ENCODE measurements at regions of chr5 and their contacts with region 1.

Region 1: DNA sequence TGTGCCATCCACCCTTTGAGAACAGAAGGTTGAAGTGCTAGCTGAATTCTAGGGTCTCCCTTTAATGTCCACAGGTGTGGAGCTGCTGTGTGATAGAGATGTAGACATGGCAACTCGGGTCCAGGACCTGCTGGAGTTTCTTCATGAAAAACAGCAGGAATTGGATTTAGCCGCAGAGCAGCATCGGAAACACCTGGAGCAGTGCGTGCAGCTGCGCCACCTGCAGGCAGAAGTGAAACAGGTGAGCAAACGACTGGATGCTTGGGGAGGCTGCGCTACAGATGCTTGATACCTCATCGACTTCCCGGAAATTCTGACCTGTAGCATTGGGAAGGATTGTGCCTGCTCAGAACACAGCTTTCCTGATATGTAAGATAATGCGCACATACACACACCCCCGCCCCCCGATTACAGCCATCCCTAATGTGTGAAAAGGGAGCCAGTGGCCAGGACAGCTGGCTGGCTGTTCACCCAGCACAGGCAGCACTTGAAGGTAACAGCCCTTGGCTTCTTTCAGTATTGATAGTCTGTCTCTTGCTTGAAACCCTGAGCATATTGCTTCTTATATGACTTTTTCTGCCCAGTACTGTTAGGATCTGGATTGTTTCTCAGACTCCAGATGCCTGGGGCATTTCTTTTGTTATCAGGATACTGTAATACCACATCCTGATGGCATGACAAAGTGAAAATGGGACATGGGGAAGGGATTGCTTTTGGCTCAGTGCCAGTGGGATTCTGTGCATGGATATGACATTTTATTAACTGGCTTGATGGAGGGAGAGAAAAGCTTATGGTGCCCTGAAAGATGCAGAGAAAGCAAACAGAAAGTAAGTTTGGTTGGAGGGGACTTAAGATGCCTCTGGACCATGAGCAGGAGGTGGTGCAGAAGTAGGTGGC is 216.8 kb upstream of the OTULINL start:
- DNase-seq: peak; percentile 13
- ATAC-seq: peak; percentile 95
- H3K4me3 ChIP-seq: no peak overlapping the region
- H3K27ac ChIP-seq: no peak overlapping the region
- H3K4me1 ChIP-seq: no peaks in the 10 kb centered on the region
- H3K27me3 ChIP-seq: no peaks in the 10 kb centered on the region
- CTCF ChIP-seq: peak; percentile 54 to 90 (median 87); a peak in 5 of 6 replicates
- POLR2A ChIP-seq: no peak
- RAD21 ChIP-seq: peak; percentile 60

Region 2: DNA sequence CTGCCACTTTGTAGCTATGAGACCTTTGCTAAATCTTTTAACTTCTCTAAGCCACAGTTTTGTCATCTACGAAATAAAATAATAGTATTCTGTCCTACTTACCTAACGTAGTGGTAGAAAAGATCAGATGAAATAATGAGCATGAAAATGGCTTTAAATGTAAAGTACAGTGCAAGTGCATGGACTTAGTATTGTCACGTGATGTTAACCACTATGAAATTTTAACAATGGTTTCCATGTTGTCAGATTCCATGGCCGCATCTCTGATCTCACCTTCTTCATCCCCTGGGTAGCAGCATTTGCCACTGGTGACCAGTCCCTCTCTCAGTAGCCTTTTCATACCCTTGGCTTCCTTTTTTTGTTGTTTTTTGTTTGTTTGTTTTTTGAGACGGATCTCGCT is 466.3 kb before region 1 on chr5:
- CTCF ChIA-PET with region 1: no interaction called
- POLR2A ChIA-PET with region 1: no interaction called
- RAD21 ChIA-PET with region 1: no interaction called
- intact Hi-C with region 1: no loop called
- DNase-seq: no peak
- ATAC-seq: no peak
- H3K4me3 ChIP-seq: no peak overlapping the region
- H3K27ac ChIP-seq: no peak overlapping the region
- H3K4me1 ChIP-seq: no peaks in the 10 kb centered on the region
- H3K27me3 ChIP-seq: peaks cover 9% of the 10 kb centered on the region; the same call in 1 of the 2 replicates
- CTCF ChIP-seq: no peak
- POLR2A ChIP-seq: no peak
- RAD21 ChIP-seq: no peak

Region 3: GRCh38 chr5:13987843-13988464 is 376.9 kb before region 1 on chr5:
- CTCF ChIA-PET with region 1: interaction called, 4 read pairs
- POLR2A ChIA-PET with region 1: no interaction called
- RAD21 ChIA-PET with region 1: no interaction called
- intact Hi-C with region 1: loop called (anchors 1 kb)
- DNase-seq: peak; percentile 42
- ATAC-seq: peak; percentile 64
- H3K4me3 ChIP-seq: no peak overlapping the region
- H3K27ac ChIP-seq: no peak overlapping the region
- H3K4me1 ChIP-seq: peaks cover 7 to 14% of the 10 kb centered on the region in 2 experiments
- H3K27me3 ChIP-seq: no peaks in the 10 kb centered on the region
- CTCF ChIP-seq: peak; percentile 72 to 92 (median 75)
- POLR2A ChIP-seq: no peak
- RAD21 ChIP-seq: peak; percentile 92

Region 4: DNA sequence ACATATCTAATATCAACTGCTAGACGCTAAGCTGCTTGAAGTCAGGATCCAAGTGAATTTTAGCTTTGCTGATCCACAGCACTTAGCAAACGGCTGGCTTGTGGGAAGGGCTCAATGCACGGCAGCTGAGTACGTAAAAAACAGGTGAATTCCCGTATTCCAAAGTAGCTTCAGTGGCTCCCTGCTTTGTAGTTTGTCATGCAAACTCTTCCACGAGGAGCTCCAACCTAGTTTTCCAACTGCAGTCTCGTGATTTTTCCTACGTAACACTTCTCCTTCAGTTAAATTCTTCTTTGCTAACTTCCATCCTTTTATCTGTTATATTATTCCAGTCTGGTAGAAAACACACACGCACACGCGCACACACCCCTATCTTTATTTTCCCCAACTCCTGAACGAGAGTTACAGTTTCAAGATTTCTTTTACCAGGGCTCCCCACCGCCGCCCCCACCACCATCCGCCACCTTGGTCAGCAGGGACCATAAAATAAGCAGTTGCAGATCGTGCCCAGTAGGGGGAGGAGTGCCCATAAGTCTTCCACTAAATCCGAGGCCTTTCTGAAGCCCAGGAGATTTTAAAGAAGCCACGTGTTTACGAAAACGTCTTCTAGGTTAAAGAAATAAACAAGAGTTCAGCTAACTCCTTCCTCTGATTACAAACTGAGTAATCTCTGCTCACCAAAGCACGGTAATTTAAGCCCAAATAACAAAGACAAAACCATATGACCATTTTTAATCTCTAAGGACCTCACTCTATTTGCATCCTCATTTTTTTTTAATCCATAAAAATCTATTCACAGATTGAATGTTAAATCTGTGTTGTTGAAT is 256.4 kb before region 1 on chr5:
- CTCF ChIA-PET with region 1: interaction called, 3 read pairs
- POLR2A ChIA-PET with region 1: no interaction called
- RAD21 ChIA-PET with region 1: no interaction called
- intact Hi-C with region 1: loop called (anchors 5 kb)
- DNase-seq: peak; percentile 71
- ATAC-seq: peak; percentile 85
- H3K4me3 ChIP-seq: peak overlapping the region in 1 of 2 experiments; percentile 27; a peak in 2 of 4 replicates
- H3K27ac ChIP-seq: no peak overlapping the region
- H3K4me1 ChIP-seq: peaks cover 18 to 40% of the 10 kb centered on the region in 2 experiments
- H3K27me3 ChIP-seq: no peaks in the 10 kb centered on the region
- CTCF ChIP-seq: peak; percentile 57 to 80 (median 73); a peak in 5 of 6 replicates
- POLR2A ChIP-seq: no peak
- RAD21 ChIP-seq: peak; percentile 82

Region 5: DNA sequence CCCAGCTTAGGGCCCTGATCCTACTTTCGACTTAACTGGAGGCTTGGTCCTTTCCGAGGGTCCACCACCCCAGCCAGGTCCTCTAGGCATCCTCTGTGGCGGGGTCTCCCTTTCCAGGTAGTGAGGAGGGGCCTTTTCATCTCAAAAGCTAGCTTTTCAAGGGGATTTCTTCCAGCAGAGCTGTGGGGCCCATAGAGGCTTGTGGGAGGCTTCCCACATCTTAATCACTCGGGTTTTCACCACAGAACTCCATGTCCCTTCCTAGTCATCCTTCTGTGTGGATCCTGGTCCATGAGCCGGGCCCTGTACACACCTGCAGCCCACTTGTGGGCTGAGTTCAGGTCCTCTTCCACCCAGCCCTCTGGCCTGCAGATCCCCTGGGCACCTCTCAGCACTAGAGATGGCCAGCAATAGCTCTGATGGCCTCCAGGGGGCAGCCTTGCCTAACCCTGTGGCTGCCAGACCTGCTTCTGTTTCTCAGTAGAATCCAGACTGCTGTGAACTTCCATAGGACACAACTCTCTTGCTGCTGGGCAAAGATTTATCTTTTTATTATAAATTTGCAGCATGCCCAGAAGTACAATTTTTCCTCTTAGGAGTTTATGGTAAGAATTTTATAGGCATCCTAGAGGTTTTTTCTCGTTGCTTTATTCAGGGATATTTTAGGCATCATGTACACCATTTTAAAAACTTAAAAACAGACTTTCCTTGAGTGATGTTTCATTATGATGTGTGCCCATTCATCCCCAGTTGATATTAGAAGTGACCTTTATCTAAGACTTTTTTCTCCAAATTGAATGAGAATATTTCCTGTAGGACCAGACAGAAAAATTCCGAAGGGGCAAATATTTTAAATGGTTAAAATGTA is 12.7 kb before region 1 on chr5:
- CTCF ChIA-PET with region 1: interaction called, 17 read pairs
- POLR2A ChIA-PET with region 1: interaction called, 3 read pairs
- RAD21 ChIA-PET with region 1: no interaction called
- intact Hi-C with region 1: no loop called
- DNase-seq: peak; percentile 27
- ATAC-seq: peak; percentile 99
- H3K4me3 ChIP-seq: no peak overlapping the region
- H3K27ac ChIP-seq: no peak overlapping the region
- H3K4me1 ChIP-seq: no peaks in the 10 kb centered on the region
- H3K27me3 ChIP-seq: no peaks in the 10 kb centered on the region
- CTCF ChIP-seq: peak; percentile 38 to 98 (median 94); a peak in 5 of 6 replicates
- POLR2A ChIP-seq: no peak
- RAD21 ChIP-seq: peak; percentile 54

Region 6: DNA sequence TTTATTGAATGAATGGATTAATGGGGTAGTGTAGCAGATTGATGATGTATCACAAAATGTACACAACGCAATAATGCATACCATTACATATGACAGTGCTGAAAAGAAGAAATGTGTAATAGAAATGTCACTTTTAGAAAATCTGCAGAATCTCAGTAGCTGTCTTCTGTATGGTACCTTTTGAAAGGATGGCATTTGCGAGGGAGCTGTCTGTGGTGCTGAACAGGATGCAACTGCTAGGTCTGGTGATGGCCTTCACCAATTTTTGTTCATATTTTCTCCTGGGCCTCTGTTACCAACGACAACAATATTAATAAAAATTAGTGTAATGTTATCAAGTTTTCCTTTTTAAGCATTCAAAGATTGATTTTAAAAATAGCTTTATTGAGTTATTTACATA is 263.5 kb after region 1 on chr5:
- CTCF ChIA-PET with region 1: no interaction called
- POLR2A ChIA-PET with region 1: no interaction called
- RAD21 ChIA-PET with region 1: no interaction called
- intact Hi-C with region 1: no loop called
- DNase-seq: no peak
- ATAC-seq: no peak
- H3K4me3 ChIP-seq: no peak overlapping the region
- H3K27ac ChIP-seq: no peak overlapping the region
- H3K4me1 ChIP-seq: no peaks in the 10 kb centered on the region
- H3K27me3 ChIP-seq: no peaks in the 10 kb centered on the region; the same call in 1 of the 2 replicates
- CTCF ChIP-seq: no peak
- POLR2A ChIP-seq: no peak
- RAD21 ChIP-seq: no peak

Region 7: GRCh38 chr5:14650052-14650451 is 285.2 kb after region 1 on chr5:
- CTCF ChIA-PET with region 1: interaction called, 20 read pairs
- POLR2A ChIA-PET with region 1: no interaction called
- RAD21 ChIA-PET with region 1: no interaction called
- intact Hi-C with region 1: no loop called
- DNase-seq: no peak
- ATAC-seq: no peak
- H3K4me3 ChIP-seq: no peak overlapping the region
- H3K27ac ChIP-seq: no peak overlapping the region
- H3K4me1 ChIP-seq: no peaks in the 10 kb centered on the region
- H3K27me3 ChIP-seq: peaks cover 7% of the 10 kb centered on the region; the same call in 1 of the 2 replicates
- CTCF ChIP-seq: no peak
- POLR2A ChIP-seq: no peak
- RAD21 ChIP-seq: no peak

Region 8: DNA sequence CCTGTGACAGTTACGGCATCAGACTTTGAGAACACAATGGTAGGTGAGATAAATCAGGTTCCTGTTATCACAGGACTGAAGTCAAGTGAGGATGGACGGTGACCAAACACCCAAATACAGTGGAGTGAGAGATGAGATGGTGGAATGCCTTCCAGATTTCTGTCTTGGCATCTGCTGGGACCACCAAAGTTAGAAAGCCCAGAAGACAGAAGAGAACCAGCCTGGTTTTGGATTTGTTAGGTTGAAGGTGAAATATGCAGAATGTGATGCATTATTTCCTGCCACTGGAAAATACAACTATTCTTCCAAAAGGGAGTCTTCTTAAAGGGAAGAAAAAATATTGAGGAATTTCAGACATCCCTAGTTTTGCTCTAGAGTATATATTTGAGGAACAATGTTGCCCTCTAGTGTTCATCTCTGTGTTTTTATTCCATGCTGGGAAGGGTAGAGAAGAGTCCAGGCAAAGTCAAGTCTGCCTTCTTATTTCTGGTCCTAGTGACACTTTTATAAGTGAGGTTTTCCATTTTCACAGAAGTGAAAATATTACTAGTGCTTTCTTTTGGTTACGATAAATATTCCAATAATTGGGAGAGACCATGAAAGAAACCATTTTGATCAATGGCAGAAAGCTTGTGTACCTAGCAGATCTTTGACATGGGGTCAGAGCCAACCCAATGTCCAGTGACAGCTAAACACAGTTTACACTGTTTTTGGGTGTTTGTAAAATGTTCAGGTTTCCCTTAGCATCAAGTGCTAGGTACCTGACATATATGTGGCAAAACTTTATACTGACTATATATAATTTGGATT is 649.0 kb after region 1 on chr5:
- CTCF ChIA-PET with region 1: interaction called, 3 read pairs
- POLR2A ChIA-PET with region 1: no interaction called
- RAD21 ChIA-PET with region 1: no interaction called
- intact Hi-C with region 1: loop called (anchors 10 kb)
- DNase-seq: peak; percentile 58
- ATAC-seq: peak; percentile 89
- H3K4me3 ChIP-seq: no peak overlapping the region
- H3K27ac ChIP-seq: no peak overlapping the region
- H3K4me1 ChIP-seq: peaks cover 8 to 9% of the 10 kb centered on the region in 2 experiments
- H3K27me3 ChIP-seq: peaks cover 7% of the 10 kb centered on the region; the same call in 1 of the 2 replicates
- CTCF ChIP-seq: peak; percentile 56 to 75 (median 59); a peak in 5 of 6 replicates
- POLR2A ChIP-seq: no peak
- RAD21 ChIP-seq: peak; percentile 78